Lower leg skin (tissue), 4 donors: ENCODE measurements at regions of chr10 and their contacts with region 1.

Region 1: DNA sequence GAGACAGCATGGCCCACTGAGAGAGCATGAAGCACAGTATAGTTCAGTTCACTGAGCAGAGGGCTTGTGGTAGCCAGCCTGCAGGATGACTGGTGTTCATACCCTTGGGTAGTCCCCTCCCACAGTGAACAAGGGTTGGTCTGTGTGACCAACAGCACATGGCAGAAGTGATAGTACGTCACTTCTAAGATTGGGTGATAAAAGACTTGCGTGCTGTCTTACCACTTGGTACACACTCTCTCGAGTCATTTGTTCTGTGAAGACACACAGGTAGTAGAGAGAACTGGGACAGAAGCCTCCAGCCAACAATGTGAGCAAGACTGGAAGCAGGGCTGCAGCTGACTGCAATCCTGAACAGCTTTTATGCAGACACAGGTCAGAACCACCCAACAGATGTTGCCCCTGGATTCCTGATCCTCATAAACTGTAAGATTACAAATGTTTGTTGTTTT is 14.6 kb downstream of the EPC1 start:
- DNase-seq: no peak
- H3K4me3 ChIP-seq: no peak overlapping the region
- CTCF ChIP-seq: no peak
- POLR2A ChIP-seq: no peak

Region 2: GRCh38 chr10:32279795-32280194 is 52.5 kb before region 1 on chr10:
- intact Hi-C with region 1: loop called (anchors 10 kb)
- DNase-seq: no peak
- H3K4me3 ChIP-seq: no peak overlapping the region
- CTCF ChIP-seq: no peak
- POLR2A ChIP-seq: no peak